ENCODE measurements at regions of chr12 and their contacts with region 1.

Region 1: DNA sequence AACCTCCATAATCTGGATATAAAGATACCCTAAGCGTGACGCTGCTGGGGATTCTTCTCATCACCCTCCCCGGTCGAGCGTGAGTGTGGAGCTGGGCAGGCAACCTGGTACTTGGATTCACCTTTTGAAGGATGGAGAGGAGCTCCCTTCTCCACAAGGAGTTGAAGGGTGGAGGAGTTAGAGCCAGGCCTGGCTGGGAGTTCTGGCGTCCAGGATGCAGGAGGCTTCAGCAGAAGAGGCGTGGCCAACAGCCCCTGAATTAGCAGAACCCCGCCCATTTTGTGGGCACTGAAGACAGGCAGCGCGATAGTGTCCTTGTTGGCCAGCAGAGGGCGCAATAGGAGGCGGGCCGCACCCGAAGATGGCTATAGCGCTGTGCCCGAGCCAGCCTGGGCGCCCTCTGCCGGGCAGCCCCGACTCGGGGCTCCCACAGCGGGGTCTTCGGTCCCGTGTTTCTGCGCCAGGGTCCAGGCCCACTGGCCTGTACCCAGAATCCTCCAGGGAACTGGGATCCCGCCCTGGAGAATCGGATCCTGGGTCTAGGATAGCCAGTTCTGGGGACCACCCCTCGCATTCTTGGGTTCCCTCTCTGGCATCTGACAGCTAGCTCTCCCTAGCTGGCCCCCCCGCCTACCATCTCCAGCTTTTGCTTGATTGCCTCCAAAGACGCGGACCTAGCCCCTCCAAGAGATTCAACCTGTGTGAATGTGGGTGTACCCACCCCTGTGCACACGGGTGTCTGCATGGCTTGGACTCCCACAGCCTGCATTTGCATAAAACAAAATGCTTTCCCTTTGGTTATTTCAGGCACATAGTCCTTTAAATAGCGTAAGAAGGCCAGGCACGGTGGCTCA is 26.0 kb upstream of the SMUG1 start:
- DNase-seq: peak; percentile 94
- H3K4me3 Mint-ChIP-seq: peak overlapping the region; percentile 78
- H3K27ac Mint-ChIP-seq: no peak overlapping the region
- H3K4me1 Mint-ChIP-seq: peaks cover 44% of the 10 kb centered on the region
- H3K27me3 Mint-ChIP-seq: peaks cover 22% of the 10 kb centered on the region

Region 2: DNA sequence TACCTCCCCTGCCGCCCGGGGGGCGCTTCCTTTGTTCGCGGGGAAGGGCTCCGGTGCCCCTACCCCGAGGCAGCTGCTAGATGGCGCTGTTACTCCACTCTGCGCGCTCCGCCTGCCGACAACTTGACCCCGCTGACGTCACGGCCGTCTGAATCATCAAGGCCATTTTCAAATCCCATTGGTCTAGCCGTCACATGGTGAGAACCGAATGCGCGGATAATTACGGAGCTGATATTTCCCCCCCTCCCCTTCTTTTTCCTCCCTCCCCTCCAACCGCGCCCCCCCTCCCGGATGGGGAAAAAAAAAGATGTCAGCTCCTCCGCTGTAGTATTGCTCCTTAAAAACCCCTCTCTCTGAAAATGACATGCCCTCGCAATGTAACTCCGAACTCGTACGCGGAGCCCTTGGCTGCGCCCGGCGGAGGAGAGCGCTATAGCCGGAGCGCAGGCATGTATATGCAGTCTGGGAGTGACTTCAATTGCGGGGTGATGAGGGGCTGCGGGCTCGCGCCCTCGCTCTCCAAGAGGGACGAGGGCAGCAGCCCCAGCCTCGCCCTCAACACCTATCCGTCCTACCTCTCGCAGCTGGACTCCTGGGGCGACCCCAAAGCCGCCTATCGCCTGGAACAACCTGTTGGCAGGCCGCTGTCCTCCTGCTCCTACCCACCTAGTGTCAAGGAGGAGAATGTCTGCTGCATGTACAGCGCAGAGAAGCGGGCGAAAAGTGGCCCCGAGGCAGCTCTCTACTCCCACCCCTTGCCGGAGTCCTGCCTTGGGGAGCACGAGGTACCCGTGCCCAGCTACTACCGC is 229.7 kb before region 1 on chr12 and contains the start of gene HOXC10:
- CTCF ChIA-PET with region 1: interaction called, 16 read pairs
- POLR2A ChIA-PET with region 1: no interaction called
- DNase-seq: peak; percentile 71
- H3K4me3 Mint-ChIP-seq: peak within 1 kb of the TSS; percentile 54
- H3K27ac Mint-ChIP-seq: peak within 1 kb of the TSS; percentile 73
- H3K4me1 Mint-ChIP-seq: peaks cover 31% of the 10 kb centered on the region
- H3K27me3 Mint-ChIP-seq: peaks cover 96% of the 10 kb centered on the region
- total RNA-seq, gene HOXC10: not detected

Region 3: GRCh38 chr12:54201001-54201794 is 13.6 kb before region 1 on chr12:
- CTCF ChIA-PET with region 1: interaction called, 17 read pairs
- POLR2A ChIA-PET with region 1: no interaction called
- DNase-seq: peak; percentile 68
- H3K4me3 Mint-ChIP-seq: no peak overlapping the region
- H3K27ac Mint-ChIP-seq: no peak overlapping the region
- H3K4me1 Mint-ChIP-seq: peaks cover 1% of the 10 kb centered on the region
- H3K27me3 Mint-ChIP-seq: peaks cover 54% of the 10 kb centered on the region

Region 4: DNA sequence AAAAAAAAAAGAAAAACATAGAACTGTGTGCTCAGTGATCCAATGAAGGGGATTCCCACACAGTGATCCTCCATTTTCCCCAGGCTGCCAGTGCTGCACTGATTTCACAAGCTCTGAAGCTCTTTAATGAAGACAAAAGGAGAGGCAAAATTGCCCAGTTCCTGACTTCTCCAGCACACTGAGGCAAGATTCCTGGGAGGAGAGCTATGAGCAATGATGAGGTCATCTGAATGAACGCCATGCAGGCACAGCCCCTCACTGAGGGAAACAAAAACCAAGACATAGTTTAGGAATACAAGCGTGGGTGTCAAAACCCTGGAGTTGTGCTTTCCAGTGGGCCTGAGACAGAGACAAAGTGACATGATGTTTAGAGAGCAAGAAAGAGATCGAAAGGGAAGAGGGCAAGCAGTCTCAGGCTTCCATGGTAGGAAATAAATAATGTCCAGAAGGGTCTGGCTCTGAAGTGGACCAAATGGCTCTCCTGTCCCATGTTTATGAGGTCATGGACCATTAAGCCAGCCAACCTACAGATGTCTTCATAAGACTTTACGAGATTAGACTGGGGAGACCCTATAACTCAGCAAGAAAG is 14.9 kb after region 1 on chr12:
- CTCF ChIA-PET with region 1: interaction called, 39 read pairs
- POLR2A ChIA-PET with region 1: no interaction called
- DNase-seq: no peak
- H3K4me3 Mint-ChIP-seq: no peak overlapping the region
- H3K27ac Mint-ChIP-seq: no peak overlapping the region
- H3K4me1 Mint-ChIP-seq: peaks cover 22% of the 10 kb centered on the region
- H3K27me3 Mint-ChIP-seq: no peaks in the 10 kb centered on the region

Region 5: GRCh38 chr12:54359033-54359761 is 144.4 kb after region 1 on chr12:
- CTCF ChIA-PET with region 1: interaction called, 11 read pairs
- POLR2A ChIA-PET with region 1: no interaction called
- DNase-seq: peak; percentile 98
- H3K4me3 Mint-ChIP-seq: no peak overlapping the region
- H3K27ac Mint-ChIP-seq: no peak overlapping the region
- H3K4me1 Mint-ChIP-seq: peaks cover 31% of the 10 kb centered on the region
- H3K27me3 Mint-ChIP-seq: no peaks in the 10 kb centered on the region

Region 6: GRCh38 chr12:54368709-54369583 is 154.2 kb after region 1 on chr12:
- CTCF ChIA-PET with region 1: interaction called, 12 read pairs
- POLR2A ChIA-PET with region 1: no interaction called
- DNase-seq: peak; percentile 93
- H3K4me3 Mint-ChIP-seq: no peak overlapping the region
- H3K27ac Mint-ChIP-seq: peak overlapping the region; percentile 46
- H3K4me1 Mint-ChIP-seq: peaks cover 50% of the 10 kb centered on the region
- H3K27me3 Mint-ChIP-seq: peaks cover 9% of the 10 kb centered on the region

Region 7: GRCh38 chr12:54439521-54440255 is 224.9 kb after region 1 on chr12:
- CTCF ChIA-PET with region 1: no interaction called
- POLR2A ChIA-PET with region 1: no interaction called
- DNase-seq: peak; percentile 17
- H3K4me3 Mint-ChIP-seq: no peak overlapping the region
- H3K27ac Mint-ChIP-seq: no peak overlapping the region
- H3K4me1 Mint-ChIP-seq: peaks cover 7% of the 10 kb centered on the region
- H3K27me3 Mint-ChIP-seq: peaks cover 7% of the 10 kb centered on the region